ENCODE measurements at regions of chr9 and their contacts with region 1.

Region 1: DNA sequence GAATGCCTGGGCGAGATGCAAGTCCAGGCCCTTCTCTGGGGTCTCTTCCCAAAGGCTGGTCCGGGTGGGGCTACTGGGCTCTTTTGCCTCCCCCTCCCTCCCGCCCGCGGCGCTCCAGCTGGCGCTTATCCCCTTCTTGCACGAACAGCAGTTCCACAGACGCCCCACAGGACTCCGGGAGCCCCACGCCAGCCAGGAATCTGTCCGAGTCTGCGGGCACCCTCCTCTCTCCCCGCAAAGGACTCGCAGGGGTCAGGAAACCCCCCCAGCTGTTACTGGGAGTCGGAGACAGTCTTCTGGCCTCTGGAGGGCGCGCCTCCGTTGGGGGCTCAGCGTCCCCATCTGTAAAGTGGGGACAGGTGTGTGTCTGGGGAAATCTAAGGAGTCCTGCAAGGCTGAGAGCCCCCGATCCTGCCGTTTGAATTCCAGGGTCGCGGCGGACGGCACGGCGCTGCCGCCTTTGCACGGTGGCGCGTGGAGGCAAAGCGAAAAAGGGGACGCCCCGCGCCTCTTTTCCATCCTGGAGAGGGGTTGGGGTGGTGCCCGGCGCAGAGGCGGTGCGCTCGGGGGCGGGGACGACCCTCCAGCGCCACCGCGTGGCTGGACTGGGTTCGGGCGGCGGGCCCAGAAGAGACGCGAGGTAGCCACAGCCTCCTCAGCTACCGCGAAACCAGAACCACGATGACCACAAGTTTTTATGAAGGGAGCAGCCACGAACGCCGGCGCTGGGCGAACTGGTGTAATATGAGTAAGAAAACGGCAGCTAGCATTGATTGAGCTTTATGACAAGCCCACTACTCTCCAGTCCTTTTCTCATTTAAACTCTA is 2.9 kb upstream of the CCIN start:
- DNase-seq: peak; percentile 77 to 82 (median 79)
- H3K4me3 ChIP-seq: peak overlapping the region; percentile 64
- H3K4me3 Mint-ChIP-seq: peak overlapping the region; percentile 60 to 90 (median 81)
- H3K27ac ChIP-seq: no peak overlapping the region
- H3K27ac Mint-ChIP-seq: peak overlapping the region in 7 of 8 donors; percentile 30 to 92 (median 69)
- H3K4me1 ChIP-seq: no peaks in the 10 kb centered on the region
- H3K4me1 Mint-ChIP-seq: peaks cover 6 to 21% (median 13%) of the 10 kb centered on the region in 3 donors
- H3K27me3 ChIP-seq: no peaks in the 10 kb centered on the region
- H3K27me3 Mint-ChIP-seq: peaks cover 0 to 4% of the 10 kb centered on the region in 2 donors

Region 2: DNA sequence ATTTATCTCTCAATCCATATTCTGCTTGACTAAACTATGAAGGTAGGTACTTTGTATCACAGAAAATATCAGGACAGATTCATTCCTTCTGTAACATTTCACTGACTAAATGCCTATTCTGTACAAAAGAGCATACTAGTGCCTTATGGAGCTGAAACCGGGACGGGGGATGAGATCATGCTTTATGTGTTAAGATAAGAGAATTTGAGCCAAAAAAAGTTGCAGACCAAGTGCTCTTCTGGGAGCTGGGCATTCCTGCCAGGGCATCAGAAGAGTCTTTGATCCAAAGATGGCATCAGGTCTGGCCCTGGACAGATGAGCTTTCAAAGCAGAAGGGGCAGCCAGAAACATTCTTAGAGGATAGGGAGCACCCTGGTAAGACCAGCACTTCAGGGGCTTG is 57.2 kb before region 1 on chr9:
- CTCF ChIA-PET with region 1: interaction called, 278 read pairs
- POLR2A ChIA-PET with region 1: interaction called, 5 read pairs
- DNase-seq: no peak
- H3K4me3 ChIP-seq: no peak overlapping the region
- H3K4me3 Mint-ChIP-seq: no peak overlapping the region
- H3K27ac ChIP-seq: no peak overlapping the region
- H3K27ac Mint-ChIP-seq: no peak overlapping the region
- H3K4me1 ChIP-seq: no peaks in the 10 kb centered on the region
- H3K4me1 Mint-ChIP-seq: no peaks in the 10 kb centered on the region
- H3K27me3 ChIP-seq: no peaks in the 10 kb centered on the region
- H3K27me3 Mint-ChIP-seq: no peaks in the 10 kb centered on the region

Region 3: DNA sequence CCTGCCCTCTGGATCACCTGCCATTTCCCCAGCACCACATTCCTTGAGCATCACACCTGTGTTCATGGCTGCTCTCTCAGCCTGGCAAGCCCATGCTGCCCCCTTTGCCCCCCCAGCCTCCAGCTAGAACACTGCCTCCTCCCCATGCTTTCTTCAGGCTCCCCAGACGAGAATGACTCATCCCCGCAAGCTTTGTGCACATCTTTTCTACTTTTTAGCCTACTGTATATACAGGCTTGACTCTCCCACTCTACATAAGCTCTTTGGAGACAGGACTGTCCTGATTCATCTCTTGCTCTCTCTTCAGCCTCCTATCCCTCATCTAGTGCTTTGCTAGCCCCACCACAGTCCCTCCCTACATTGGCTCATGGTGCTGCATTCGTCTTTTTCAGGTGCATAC is 49.7 kb before region 1 on chr9:
- CTCF ChIA-PET with region 1: interaction called, 15 read pairs
- POLR2A ChIA-PET with region 1: no interaction called
- DNase-seq: no peak
- H3K4me3 ChIP-seq: no peak overlapping the region
- H3K4me3 Mint-ChIP-seq: no peak overlapping the region
- H3K27ac ChIP-seq: no peak overlapping the region
- H3K27ac Mint-ChIP-seq: peak overlapping the region in 1 of 8 donors; percentile 87
- H3K4me1 ChIP-seq: no peaks in the 10 kb centered on the region
- H3K4me1 Mint-ChIP-seq: no peaks in the 10 kb centered on the region
- H3K27me3 ChIP-seq: no peaks in the 10 kb centered on the region
- H3K27me3 Mint-ChIP-seq: no peaks in the 10 kb centered on the region

Region 4: GRCh38 chr9:36136272-36136893 is 29.9 kb before region 1 on chr9 and contains the start of gene GLIPR2:
- CTCF ChIA-PET with region 1: interaction called, 65 read pairs
- POLR2A ChIA-PET with region 1: interaction called, 5 read pairs
- DNase-seq: peak; percentile 72 to 85 (median 76)
- H3K4me3 ChIP-seq: peak within 1 kb of the TSS; percentile 86
- H3K4me3 Mint-ChIP-seq: peak within 1 kb of the TSS; percentile 87 to 99 (median 96)
- H3K27ac ChIP-seq: peak within 1 kb of the TSS; percentile 69
- H3K27ac Mint-ChIP-seq: peak within 1 kb of the TSS; percentile 85 to 99 (median 98)
- H3K4me1 ChIP-seq: peaks cover 52% of the 10 kb centered on the region
- H3K4me1 Mint-ChIP-seq: peaks cover 48 to 54% (median 52%) of the 10 kb centered on the region in 3 donors
- H3K27me3 ChIP-seq: no peaks in the 10 kb centered on the region
- H3K27me3 Mint-ChIP-seq: no peaks in the 10 kb centered on the region
- total RNA-seq, gene GLIPR2: 17.1 to 17.5 TPM

Region 5: DNA sequence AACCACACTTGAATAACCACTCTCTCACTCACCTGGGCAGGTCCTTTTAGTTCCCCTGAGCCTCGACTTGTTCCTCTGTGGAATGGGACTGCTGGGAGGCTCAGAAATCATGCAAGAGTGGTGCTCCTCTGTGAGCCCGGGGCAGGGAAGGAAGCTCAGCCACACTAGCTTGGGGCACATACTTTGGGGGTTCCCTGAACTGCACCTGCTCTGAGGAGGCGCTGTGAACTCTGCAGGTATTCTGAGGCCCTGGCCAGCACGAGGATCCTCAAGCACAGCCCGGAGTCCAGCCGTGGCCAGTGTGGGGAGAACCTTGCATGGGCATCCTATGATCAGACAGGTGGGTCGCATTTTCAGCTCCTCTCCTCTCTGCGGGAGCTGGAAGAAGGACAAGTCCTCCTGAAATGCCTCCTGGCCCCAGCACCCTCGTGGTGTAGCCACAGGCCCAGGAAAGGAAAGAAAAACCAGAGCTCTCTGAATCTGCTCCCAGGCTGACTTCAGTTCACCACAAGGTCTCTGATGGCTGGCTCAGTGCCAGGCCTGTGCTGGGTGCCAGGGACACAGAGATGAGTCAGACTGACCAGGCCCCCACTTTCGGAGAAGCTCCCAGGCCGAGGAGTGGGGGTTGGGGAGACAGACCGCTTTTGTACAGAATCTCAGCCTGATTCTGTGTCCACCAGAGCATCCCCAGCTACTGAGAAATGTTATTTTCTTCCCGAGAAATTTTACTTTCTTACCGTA is 17.8 kb before region 1 on chr9:
- CTCF ChIA-PET with region 1: interaction called, 58 read pairs
- POLR2A ChIA-PET with region 1: interaction called, 6 read pairs
- DNase-seq: peak; percentile 40 to 89 (median 67)
- H3K4me3 ChIP-seq: no peak overlapping the region
- H3K4me3 Mint-ChIP-seq: peak overlapping the region in 5 of 7 donors; percentile 47 to 75 (median 61)
- H3K27ac ChIP-seq: no peak overlapping the region
- H3K27ac Mint-ChIP-seq: peak overlapping the region; percentile 77 to 97 (median 92)
- H3K4me1 ChIP-seq: peaks cover 96% of the 10 kb centered on the region
- H3K4me1 Mint-ChIP-seq: peaks cover 85 to 96% (median 90%) of the 10 kb centered on the region in 3 donors
- H3K27me3 ChIP-seq: no peaks in the 10 kb centered on the region
- H3K27me3 Mint-ChIP-seq: peaks cover 0 to 3% of the 10 kb centered on the region in 2 donors

Measured in CD8-positive, alpha-beta memory T cell (primary cell).